Activated CD4-positive, alpha-beta memory T cell treated with anti-CD3 and anti-CD28 coated beads for 36 hours (primary cell): ENCODE measurements at regions of chr2 and their contacts with region 1.

Region 1: GRCh38 chr2:28452534-28453081 is 43.3 kb upstream of the PLB1 start:
- DNase-seq: peak; percentile 89
- H3K4me3 Mint-ChIP-seq: no peak overlapping the region
- H3K27ac Mint-ChIP-seq: peak overlapping the region; percentile 59
- H3K4me1 Mint-ChIP-seq: peaks cover 45% of the 10 kb centered on the region
- H3K27me3 Mint-ChIP-seq: no peaks in the 10 kb centered on the region

Region 2: DNA sequence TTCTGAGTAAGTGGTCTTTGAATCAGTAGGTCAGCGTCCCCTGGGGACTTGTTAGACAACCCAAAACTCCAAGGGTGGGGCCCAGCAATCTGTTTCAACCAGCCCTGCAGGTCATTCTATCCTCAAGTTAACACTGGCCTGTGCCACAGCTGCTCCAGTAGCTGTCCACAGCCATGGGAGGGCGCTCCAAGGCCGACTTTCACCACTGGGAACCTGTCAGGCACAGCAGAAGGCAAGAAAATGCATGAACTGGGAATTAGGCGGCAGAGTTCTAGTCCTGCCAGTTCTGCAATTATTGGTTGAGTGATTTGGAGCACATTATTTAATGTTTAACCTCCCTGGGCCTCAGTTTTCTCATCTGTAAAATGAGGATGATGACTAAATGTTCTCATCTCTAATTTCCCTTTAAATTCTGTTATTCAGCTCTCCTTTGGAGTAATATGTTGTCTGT is 698.4 kb before region 1 on chr2:
- CTCF ChIA-PET with region 1: interaction called, 9 read pairs
- POLR2A ChIA-PET with region 1: interaction called, 4 read pairs
- intact Hi-C with region 1: loop called (anchors 1 kb)
- DNase-seq: peak; percentile 91
- H3K4me3 Mint-ChIP-seq: no peak overlapping the region
- H3K27ac Mint-ChIP-seq: peak overlapping the region; percentile 30
- H3K4me1 Mint-ChIP-seq: peaks cover 14% of the 10 kb centered on the region
- H3K27me3 Mint-ChIP-seq: peaks cover 10% of the 10 kb centered on the region

Region 3: DNA sequence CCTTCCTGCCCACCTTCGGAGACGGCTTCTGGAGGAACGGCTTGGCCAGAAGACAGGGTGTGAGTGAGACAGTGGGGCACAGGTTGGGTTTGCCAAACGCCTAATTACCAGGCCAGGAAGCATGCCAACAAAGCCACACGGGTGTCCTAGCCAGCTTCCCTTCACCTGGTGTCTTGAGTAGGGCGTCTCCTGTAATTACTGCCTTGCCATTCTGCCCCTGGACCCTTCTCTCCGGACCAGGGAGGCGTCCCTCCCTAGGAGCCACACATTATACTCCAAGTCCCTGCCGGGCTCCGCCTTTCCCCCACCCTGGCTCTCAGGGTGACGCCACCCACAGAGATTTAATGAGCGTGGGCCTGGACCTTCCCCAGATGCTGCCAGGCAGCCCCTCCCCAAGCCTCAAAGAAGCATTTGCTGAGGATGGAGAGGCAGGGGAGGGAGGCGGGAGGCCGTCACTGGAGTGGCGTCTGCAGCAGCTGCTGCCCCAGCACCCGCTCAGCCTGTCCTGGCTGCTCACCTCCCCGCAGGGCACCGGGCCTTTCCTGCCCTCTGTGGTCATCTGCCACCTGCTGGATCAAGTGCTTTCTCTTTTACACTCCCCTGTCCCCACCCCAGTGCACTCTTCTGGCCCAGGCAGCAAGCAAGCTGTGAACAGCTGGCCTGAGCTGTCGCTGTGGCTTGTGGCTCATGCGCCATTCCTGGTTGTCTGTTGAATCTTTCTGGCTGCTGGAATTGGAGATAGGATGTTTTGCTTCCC is 39.3 kb before region 1 on chr2:
- CTCF ChIA-PET with region 1: interaction called, 3 read pairs
- POLR2A ChIA-PET with region 1: interaction called, 4 read pairs
- intact Hi-C with region 1: loop called (anchors 1 kb)
- DNase-seq: no peak
- H3K4me3 Mint-ChIP-seq: peak overlapping the region; percentile 9
- H3K27ac Mint-ChIP-seq: peak overlapping the region; percentile 42
- H3K4me1 Mint-ChIP-seq: peaks cover 37% of the 10 kb centered on the region
- H3K27me3 Mint-ChIP-seq: no peaks in the 10 kb centered on the region